Posterior cingulate gyrus (tissue), 11 donors: ENCODE measurements at regions of chr17 and their contacts with region 1.

Region 1: GRCh38 chr17:16568541-16569357 is at the start of gene ZNF287:
- DNase-seq: peak; percentile 92 to 99 (median 96)

Region 2: GRCh38 chr17:16537130-16537458 is 31.7 kb before region 1 on chr17:
- intact Hi-C with region 1: loop called (anchors 2 kb)
- DNase-seq: no peak